B cell (primary cell): ENCODE measurements at regions of chr20 and their contacts with region 1.

Region 1: GRCh38 chr20:8722276-8722928 is 346.5 kb upstream of the PLCB4 start:
- DNase-seq: peak; percentile 64
- ATAC-seq: peak; percentile 28
- H3K4me3 ChIP-seq: no peak overlapping the region
- H3K4me3 Mint-ChIP-seq: no peak overlapping the region
- H3K27ac ChIP-seq: no peak overlapping the region
- H3K27ac Mint-ChIP-seq: no peak overlapping the region
- H3K4me1 ChIP-seq: no peaks in the 10 kb centered on the region
- H3K4me1 Mint-ChIP-seq: no peaks in the 10 kb centered on the region
- H3K27me3 ChIP-seq: no peaks in the 10 kb centered on the region
- H3K27me3 Mint-ChIP-seq: no peaks in the 10 kb centered on the region
- CTCF ChIP-seq: peak; percentile 77

Region 2: DNA sequence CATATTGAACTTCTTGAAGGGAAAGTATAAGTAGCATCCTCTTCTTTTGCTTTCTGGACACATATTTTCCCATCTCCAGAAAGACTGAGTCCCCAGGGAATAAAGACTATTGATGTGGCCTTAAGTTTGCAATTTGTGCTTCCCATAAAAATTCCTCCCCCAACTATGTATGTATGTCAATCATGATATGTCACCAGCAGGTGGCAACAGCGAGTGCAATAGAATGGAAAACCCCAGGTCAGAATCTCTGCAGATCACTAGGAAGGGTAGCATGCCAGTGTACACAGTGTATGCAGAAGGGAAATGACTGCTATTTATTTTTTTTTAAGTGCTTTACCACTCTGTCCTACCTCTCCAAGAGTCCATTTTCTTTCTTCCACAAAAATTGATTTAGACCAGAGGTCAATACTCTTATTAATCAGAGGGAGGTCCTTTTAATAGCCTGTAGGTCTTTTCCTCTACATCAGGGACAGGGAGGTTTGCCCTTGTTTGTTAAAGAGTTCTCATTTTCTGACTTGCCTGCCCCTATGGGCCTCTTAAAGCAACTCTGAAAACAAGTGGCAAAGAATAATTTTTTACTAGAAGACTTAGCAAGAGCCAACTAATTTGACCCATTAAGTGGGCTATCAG is 1893.5 kb before region 1 on chr20:
- CTCF ChIA-PET with region 1: interaction called, 53 read pairs
- POLR2A ChIA-PET with region 1: no interaction called
- intact Hi-C with region 1: no loop called
- DNase-seq: peak; percentile 43
- ATAC-seq: no peak
- H3K4me3 ChIP-seq: no peak overlapping the region
- H3K4me3 Mint-ChIP-seq: no peak overlapping the region
- H3K27ac ChIP-seq: no peak overlapping the region
- H3K27ac Mint-ChIP-seq: no peak overlapping the region
- H3K4me1 ChIP-seq: no peaks in the 10 kb centered on the region
- H3K4me1 Mint-ChIP-seq: no peaks in the 10 kb centered on the region
- H3K27me3 ChIP-seq: no peaks in the 10 kb centered on the region
- H3K27me3 Mint-ChIP-seq: no peaks in the 10 kb centered on the region
- CTCF ChIP-seq: peak; percentile 67

Region 3: DNA sequence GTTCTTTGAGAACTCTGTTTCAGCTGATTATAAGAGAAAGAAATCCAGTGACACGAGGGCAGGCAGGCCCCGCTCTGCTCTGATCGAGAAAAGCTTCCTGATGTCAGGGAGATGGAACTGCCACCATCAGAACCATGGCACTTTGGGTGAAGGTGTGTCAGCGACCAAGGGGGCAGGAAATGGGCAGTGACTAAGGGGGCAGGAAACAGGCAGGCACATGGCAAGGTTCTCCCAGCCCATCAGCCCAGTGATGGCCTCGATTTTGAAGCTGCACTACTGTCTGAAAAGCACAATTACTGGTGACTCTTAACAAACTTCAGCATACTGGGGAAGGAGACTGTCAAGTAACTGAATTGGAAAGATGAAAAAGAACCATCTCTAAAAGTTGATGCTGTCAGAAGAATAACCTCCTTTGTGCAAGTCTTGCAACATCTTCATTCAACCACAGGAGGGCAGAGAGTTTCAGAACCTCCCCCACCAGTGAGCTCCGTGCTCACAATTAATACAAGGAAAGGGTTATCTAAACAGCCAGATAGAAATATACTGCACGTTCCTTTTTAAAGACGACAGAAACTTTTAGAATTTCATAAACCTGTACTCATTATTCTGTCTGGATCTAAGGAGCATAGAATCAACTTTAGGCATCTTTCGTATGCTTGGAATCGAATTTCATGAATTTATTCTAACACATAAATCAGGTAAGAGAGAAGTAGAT is 741.9 kb before region 1 on chr20:
- CTCF ChIA-PET with region 1: interaction called, 12 read pairs
- POLR2A ChIA-PET with region 1: no interaction called
- intact Hi-C with region 1: no loop called
- DNase-seq: peak; percentile 18
- ATAC-seq: peak; percentile 41
- H3K4me3 ChIP-seq: no peak overlapping the region
- H3K4me3 Mint-ChIP-seq: no peak overlapping the region
- H3K27ac ChIP-seq: no peak overlapping the region
- H3K27ac Mint-ChIP-seq: no peak overlapping the region
- H3K4me1 ChIP-seq: no peaks in the 10 kb centered on the region
- H3K4me1 Mint-ChIP-seq: no peaks in the 10 kb centered on the region
- H3K27me3 ChIP-seq: no peaks in the 10 kb centered on the region
- H3K27me3 Mint-ChIP-seq: no peaks in the 10 kb centered on the region
- CTCF ChIP-seq: peak; percentile 37

Region 4: GRCh38 chr20:8389381-8390036 is 332.9 kb before region 1 on chr20:
- CTCF ChIA-PET with region 1: interaction called, 14 read pairs
- POLR2A ChIA-PET with region 1: no interaction called
- intact Hi-C with region 1: no loop called
- DNase-seq: peak; percentile 47
- ATAC-seq: no peak
- H3K4me3 ChIP-seq: no peak overlapping the region
- H3K4me3 Mint-ChIP-seq: no peak overlapping the region
- H3K27ac ChIP-seq: no peak overlapping the region
- H3K27ac Mint-ChIP-seq: no peak overlapping the region
- H3K4me1 ChIP-seq: no peaks in the 10 kb centered on the region
- H3K4me1 Mint-ChIP-seq: no peaks in the 10 kb centered on the region
- H3K27me3 ChIP-seq: no peaks in the 10 kb centered on the region
- H3K27me3 Mint-ChIP-seq: peaks cover 5% of the 10 kb centered on the region
- CTCF ChIP-seq: peak; percentile 81

Region 5: GRCh38 chr20:8735674-8736073 is 13.3 kb after region 1 on chr20:
- CTCF ChIA-PET with region 1: interaction called, 19 read pairs
- POLR2A ChIA-PET with region 1: no interaction called
- intact Hi-C with region 1: no loop called
- DNase-seq: no peak
- ATAC-seq: no peak
- H3K4me3 ChIP-seq: no peak overlapping the region
- H3K4me3 Mint-ChIP-seq: no peak overlapping the region
- H3K27ac ChIP-seq: no peak overlapping the region
- H3K27ac Mint-ChIP-seq: no peak overlapping the region
- H3K4me1 ChIP-seq: no peaks in the 10 kb centered on the region
- H3K4me1 Mint-ChIP-seq: no peaks in the 10 kb centered on the region
- H3K27me3 ChIP-seq: no peaks in the 10 kb centered on the region
- H3K27me3 Mint-ChIP-seq: no peaks in the 10 kb centered on the region
- CTCF ChIP-seq: no peak